Left colon (tissue), 2 donors: ENCODE measurements at regions of chr17 and their contacts with region 1.

Region 1: DNA sequence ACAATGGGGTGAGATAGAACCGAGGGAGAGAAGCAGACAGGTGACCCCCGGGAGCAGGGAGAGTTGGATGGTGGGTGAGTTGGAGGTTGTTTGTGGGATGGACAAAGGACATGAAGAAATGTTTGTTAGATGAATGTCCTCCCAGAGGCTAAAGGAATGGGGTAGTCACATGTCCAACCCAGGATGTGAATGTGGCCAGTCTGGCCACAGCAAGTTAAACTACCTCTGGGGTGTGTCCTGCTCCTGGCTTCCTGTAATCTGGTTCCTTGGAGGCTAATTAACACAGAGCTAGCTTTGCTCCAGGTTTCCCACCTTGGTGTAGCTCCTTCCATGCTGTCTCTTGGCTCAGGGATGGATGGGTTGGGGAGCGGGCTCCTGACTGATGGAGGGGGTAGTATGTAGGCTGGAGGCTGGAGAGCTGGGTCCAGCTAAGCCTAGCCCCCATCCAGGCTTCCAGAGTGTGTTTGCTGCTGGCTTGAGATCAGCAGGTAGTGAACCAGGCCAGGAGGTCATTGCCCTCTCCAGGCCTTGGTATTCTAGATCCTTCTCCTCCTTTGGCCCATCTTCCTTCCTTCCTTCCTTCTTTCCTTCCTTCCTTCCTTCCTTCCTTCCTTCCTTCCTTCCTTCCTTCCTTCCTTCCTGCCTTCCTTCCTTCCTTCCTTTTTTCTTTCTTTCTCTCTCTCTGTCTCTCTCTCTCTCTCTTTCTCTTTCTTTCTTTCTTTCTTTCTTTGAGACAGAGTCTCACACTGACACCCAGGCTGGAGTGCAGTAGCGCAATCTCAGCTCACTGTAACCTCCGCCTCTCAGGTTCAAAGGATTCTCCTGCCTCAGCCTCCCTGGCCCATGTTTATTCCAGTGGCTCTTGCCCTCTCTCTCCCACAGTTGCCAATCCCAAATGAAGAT is 28.0 kb upstream of the UBE2G1 start:
- DNase-seq: peak in 1 of 2 donors; percentile 33
- ATAC-seq: peak; percentile 80

Region 2: GRCh38 chr17:3879186-3879585 is 515.3 kb before region 1 on chr17:
- intact Hi-C with region 1: loop called in 1 of 2 experiments (anchors 10 kb)
- DNase-seq: no peak
- ATAC-seq: peak; percentile 40